OCI-LY7 (cell line): ENCODE measurements at regions of chr1 and their contacts with region 1.

Region 1: DNA sequence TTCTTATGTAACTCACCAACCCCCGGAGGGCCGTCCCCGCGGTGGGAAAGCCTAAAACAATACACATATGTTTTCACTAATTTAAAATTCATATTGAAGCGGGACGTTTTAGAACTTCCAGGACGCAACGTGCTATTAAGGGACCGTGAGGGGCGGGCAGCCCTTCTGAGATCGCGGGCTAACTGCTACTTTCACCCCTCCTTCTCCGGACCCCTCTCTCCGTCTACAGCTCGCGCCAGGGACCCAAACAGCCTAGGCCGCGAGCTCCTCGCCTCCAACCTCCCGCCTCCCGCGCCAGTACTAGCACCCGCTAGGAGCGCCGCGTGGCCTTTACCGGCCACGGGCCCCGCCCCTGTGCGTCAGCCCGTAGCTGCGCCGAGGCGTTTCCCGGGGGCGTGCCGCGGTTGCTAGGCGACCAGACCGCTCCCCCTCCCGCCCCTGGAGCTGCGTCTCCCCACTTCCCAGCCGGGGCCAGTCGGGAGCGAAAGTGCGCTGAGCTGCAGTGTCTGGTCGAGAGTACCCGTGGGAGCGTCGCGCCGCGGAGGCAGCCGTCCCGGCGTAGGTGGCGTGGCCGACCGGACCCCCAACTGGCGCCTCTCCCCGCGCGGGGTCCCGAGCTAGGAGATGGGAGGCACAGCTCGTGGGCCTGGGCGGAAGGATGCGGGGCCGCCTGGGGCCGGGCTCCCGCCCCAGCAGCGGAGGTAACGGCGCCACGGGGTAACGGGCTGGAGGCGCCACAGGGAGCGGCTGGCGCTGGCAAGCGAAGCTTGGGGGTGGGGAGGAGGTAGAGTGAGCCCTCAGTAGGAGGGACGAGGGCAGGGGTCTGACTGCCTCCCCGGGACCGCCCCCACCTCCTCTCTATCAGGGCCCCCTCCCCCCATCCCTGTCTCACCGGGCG is at the start of gene DYRK3:
- DNase-seq: peak; percentile 94
- H3K4me3 ChIP-seq: peak within 1 kb of the TSS; percentile 83
- H3K27ac ChIP-seq: peak within 1 kb of the TSS; percentile 26
- H3K4me1 ChIP-seq: peaks cover 38% of the 10 kb centered on the region
- CTCF ChIP-seq: no peak; the same call in 1 of the 2 replicates
- total RNA-seq, gene DYRK3: 9.7 and 9.8 TPM in 2 replicates

Region 2: GRCh38 chr1:206600527-206600926 is 34.8 kb before region 1 on chr1:
- CTCF ChIA-PET with region 1: no interaction called
- POLR2A ChIA-PET with region 1: no interaction called
- intact Hi-C with region 1: no loop called
- DNase-seq: no peak
- H3K4me3 ChIP-seq: no peak overlapping the region
- H3K27ac ChIP-seq: no peak overlapping the region
- H3K4me1 ChIP-seq: no peaks in the 10 kb centered on the region
- CTCF ChIP-seq: no peak

Region 3: GRCh38 chr1:206612129-206612876 is 23.0 kb before region 1 on chr1 and contains the start of gene EIF2D:
- CTCF ChIA-PET with region 1: interaction called, 15 read pairs
- POLR2A ChIA-PET with region 1: interaction called, 8 read pairs
- intact Hi-C with region 1: no loop called
- DNase-seq: peak; percentile 96
- H3K4me3 ChIP-seq: peak within 1 kb of the TSS; percentile 72
- H3K27ac ChIP-seq: peak within 1 kb of the TSS; percentile 27
- H3K4me1 ChIP-seq: peaks cover 13% of the 10 kb centered on the region
- CTCF ChIP-seq: peak; percentile 82
- total RNA-seq, gene EIF2D: 85.4 and 89.3 TPM in 2 replicates

Region 4: DNA sequence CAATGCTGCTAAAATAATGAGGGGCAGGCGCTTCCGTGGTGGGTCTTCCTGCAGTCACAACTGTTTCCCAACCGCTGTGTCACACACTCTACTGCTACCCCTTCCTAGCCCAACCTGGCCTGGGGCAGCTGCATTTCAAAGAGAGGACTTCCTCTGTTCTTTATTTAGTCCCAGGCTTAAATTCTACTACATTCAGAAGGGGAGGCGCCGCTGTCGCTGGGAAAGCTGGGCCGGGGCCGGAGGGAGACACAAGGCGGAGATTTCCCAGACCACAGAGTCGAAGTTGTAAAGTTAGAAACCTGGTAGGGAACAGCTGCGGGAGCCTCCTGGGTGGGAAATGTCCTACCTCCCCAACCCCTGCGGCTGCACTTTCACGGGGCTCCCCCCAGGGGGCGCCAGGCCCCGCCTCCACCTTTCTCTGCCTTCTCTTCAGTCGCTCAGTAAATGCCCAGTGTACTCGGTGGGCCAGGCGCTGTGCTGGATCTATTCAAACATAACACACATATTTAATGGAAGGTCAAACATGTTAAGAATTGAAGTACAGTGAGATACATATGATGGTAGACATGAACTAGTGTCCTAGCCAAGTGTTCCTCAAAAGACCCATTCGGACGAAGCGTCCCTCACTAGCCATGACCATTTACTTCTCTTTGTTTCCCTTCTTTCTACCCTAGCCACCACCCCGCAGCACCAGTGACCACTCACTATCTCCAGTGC is 23.1 kb after region 1 on chr1:
- CTCF ChIA-PET with region 1: interaction called, 72 read pairs
- POLR2A ChIA-PET with region 1: interaction called, 31 read pairs
- intact Hi-C with region 1: no loop called
- DNase-seq: peak; percentile 82
- H3K4me3 ChIP-seq: peak overlapping the region; percentile 44
- H3K27ac ChIP-seq: peak overlapping the region; percentile 22
- H3K4me1 ChIP-seq: peaks cover 18% of the 10 kb centered on the region
- CTCF ChIP-seq: peak; percentile 98

Region 5: DNA sequence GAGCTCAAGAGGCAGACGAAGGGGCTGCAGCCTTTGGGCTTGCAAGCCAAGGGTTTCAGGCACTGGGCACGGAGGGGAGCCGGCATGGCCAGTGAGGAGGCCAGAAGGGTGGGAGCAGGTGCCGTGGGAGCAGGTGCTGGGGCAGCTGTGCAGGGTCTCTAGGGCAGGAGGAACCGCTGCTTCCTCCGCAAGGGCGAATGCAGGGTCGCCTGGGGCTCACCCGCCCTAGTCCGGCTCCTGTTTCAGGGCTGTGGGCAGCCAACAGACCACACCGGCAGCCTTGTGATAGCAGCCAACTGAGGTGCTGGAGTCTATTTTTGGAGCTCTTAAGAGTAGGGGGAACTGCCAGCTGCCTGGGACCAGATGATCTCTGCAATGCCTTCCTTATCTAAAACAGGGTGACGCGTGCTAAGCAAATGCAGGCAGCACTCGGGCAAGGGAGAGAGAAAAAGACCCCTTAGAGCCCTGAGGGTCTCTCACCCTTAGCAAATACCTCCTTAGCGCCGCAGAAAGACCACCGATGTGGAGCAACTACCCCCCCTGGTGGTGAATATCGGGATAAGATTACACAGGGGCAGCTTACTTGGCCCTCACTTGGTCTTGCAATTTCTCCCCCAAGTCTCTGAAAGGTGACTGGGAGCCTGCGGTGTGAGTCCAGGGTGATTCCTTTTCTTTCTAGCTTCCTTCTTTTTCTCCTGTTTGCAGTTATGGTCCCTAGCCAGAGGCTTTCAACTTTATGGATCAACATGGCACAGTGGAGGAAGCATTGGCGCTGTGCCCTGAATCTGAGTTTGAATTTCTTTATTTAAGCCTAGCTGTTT is 28.7 kb after region 1 on chr1:
- CTCF ChIA-PET with region 1: interaction called, 72 read pairs
- POLR2A ChIA-PET with region 1: interaction called, 31 read pairs
- intact Hi-C with region 1: loop called (anchors 1 kb)
- DNase-seq: peak; percentile 81
- H3K4me3 ChIP-seq: no peak overlapping the region
- H3K27ac ChIP-seq: no peak overlapping the region
- H3K4me1 ChIP-seq: peaks cover 18% of the 10 kb centered on the region
- CTCF ChIP-seq: peak; percentile 92

Region 6: GRCh38 chr1:206725109-206725963 is 90.0 kb after region 1 on chr1:
- CTCF ChIA-PET with region 1: interaction called, 7 read pairs
- POLR2A ChIA-PET with region 1: interaction called, 3 read pairs
- intact Hi-C with region 1: loop called (anchors 2 kb)
- DNase-seq: peak; percentile 68
- H3K4me3 ChIP-seq: no peak overlapping the region
- H3K27ac ChIP-seq: no peak overlapping the region
- H3K4me1 ChIP-seq: peaks cover 13% of the 10 kb centered on the region
- CTCF ChIP-seq: peak; percentile 84

Region 7: DNA sequence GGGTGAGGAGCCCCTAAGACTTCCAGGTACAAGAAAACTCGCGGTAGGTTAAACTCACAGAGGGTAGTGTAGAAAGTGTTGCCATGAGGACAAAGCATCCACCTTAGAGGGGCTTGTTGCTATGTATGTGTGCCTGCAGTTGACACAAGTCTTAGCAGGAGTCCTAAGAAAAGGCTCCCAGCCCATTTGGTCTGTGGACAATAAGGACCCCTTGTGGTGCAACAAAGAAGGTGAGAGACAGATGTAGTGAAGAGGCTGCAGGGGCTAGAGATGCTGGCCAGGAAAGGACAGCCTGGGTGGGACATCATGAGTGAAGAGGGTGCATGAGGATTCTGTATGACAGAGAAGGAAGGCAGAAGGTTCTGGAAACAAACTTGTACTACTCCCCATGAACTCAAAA is 173.3 kb after region 1 on chr1:
- CTCF ChIA-PET with region 1: interaction called, 4 read pairs
- POLR2A ChIA-PET with region 1: no interaction called
- intact Hi-C with region 1: loop called (anchors 1 kb)
- DNase-seq: peak; percentile 71
- H3K4me3 ChIP-seq: no peak overlapping the region
- H3K27ac ChIP-seq: no peak overlapping the region
- H3K4me1 ChIP-seq: peaks cover 1% of the 10 kb centered on the region
- CTCF ChIP-seq: peak; percentile 74

Region 8: DNA sequence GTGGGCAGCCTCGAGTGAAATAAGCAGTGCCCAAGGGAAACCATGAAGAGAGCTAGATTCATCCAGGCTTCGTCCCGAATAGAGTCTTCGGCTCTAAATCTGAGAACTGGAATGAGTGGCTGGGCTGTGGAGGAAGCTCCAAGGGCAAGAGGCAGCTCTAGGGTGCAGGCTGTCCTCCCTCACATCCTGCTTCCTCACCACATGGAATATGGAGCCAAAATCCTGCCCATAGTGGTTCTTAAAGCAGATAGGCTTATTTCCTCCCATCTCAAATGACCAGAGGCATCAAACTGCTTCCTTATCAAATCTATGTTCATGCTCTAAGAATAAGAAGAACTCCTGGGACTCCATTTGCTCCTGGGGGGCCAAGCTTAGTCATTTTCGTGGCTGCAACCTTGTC is 264.4 kb after region 1 on chr1:
- CTCF ChIA-PET with region 1: no interaction called
- POLR2A ChIA-PET with region 1: no interaction called
- intact Hi-C with region 1: no loop called
- DNase-seq: no peak
- H3K4me3 ChIP-seq: no peak overlapping the region
- H3K27ac ChIP-seq: no peak overlapping the region
- H3K4me1 ChIP-seq: peaks cover under 1% of the 10 kb centered on the region
- CTCF ChIP-seq: no peak

Region 9: GRCh38 chr1:206982216-206982615 is 346.9 kb after region 1 on chr1:
- CTCF ChIA-PET with region 1: interaction called, 3 read pairs
- POLR2A ChIA-PET with region 1: interaction called, 3 read pairs
- intact Hi-C with region 1: loop called (anchors 1 kb)
- DNase-seq: peak; percentile 62
- H3K4me3 ChIP-seq: no peak overlapping the region
- H3K27ac ChIP-seq: no peak overlapping the region
- H3K4me1 ChIP-seq: no peaks in the 10 kb centered on the region
- CTCF ChIP-seq: peak; percentile 83